ENCODE measurements at regions of chr20 and their contacts with region 1.

Region 1: DNA sequence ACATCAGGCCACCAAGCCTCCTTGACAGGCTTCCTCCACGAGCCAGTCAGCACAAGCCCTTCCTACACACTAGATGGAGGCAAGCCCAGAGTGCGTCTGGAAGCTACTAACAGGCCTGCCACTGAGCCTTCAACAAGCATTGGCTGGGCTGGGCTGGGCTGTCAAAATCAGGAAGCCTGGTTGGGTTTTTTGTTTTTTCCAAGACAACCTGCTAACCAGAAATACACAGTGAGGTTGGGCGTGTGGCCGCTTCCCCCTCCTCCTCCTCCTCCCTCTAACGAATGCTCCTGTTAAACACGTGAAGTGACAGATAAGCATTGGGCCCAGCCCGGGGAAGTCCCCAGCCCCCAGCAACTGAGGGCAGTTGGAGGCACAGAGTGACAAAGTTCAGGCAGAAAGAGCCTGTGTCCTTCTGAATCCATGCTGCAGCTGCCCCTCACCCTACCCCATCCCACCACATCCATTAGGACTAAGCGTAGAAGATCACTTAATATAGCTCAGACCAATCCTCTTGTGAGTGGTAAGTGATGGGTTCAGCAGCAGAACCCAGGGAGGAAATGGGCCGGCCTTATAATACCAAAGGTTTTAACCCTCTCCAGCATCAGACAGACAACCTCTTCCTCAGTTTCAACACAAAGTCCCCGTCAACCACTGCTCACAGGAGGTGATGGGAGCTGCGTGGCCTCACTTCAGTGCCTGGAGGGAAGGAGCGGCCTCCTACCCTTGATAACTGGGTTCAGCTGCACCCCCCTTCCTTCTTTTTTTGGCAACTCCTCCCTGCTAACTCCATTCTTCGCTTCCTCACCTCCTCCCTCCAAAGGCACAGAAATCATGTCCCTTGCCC is 1.1 kb downstream of the NFATC2 start:
- DNase-seq: peak; percentile 93
- ATAC-seq: peak; percentile 79
- H3K4me3 Mint-ChIP-seq: peak overlapping the region; percentile 89
- H3K27ac Mint-ChIP-seq: peak overlapping the region; percentile 100
- H3K4me1 Mint-ChIP-seq: peaks cover 45% of the 10 kb centered on the region
- H3K27me3 Mint-ChIP-seq: peaks cover 4% of the 10 kb centered on the region
- CTCF ChIP-seq: no peak

Region 2: GRCh38 chr20:51385646-51386530 is 155.5 kb before region 1 on chr20:
- CTCF ChIA-PET with region 1: interaction called, 19 read pairs
- POLR2A ChIA-PET with region 1: interaction called, 3 read pairs
- intact Hi-C with region 1: no loop called
- DNase-seq: peak; percentile 47
- ATAC-seq: no peak
- H3K4me3 Mint-ChIP-seq: no peak overlapping the region
- H3K27ac Mint-ChIP-seq: peak overlapping the region; percentile 21
- H3K4me1 Mint-ChIP-seq: peaks cover 68% of the 10 kb centered on the region
- H3K27me3 Mint-ChIP-seq: no peaks in the 10 kb centered on the region
- CTCF ChIP-seq: peak; percentile 66

Region 3: GRCh38 chr20:51469578-51470498 is 71.6 kb before region 1 on chr20:
- CTCF ChIA-PET with region 1: interaction called, 9 read pairs
- POLR2A ChIA-PET with region 1: interaction called, 16 read pairs
- intact Hi-C with region 1: loop called (anchors 2 kb)
- DNase-seq: no peak
- ATAC-seq: no peak
- H3K4me3 Mint-ChIP-seq: no peak overlapping the region
- H3K27ac Mint-ChIP-seq: peak overlapping the region; percentile 94
- H3K4me1 Mint-ChIP-seq: peaks cover 52% of the 10 kb centered on the region
- H3K27me3 Mint-ChIP-seq: no peaks in the 10 kb centered on the region
- CTCF ChIP-seq: no peak

Region 4: GRCh38 chr20:51492167-51493092 is 49.0 kb before region 1 on chr20:
- CTCF ChIA-PET with region 1: interaction called, 17 read pairs
- POLR2A ChIA-PET with region 1: interaction called, 31 read pairs
- intact Hi-C with region 1: no loop called
- DNase-seq: no peak
- ATAC-seq: no peak
- H3K4me3 Mint-ChIP-seq: no peak overlapping the region
- H3K27ac Mint-ChIP-seq: peak overlapping the region; percentile 92
- H3K4me1 Mint-ChIP-seq: peaks cover 93% of the 10 kb centered on the region
- H3K27me3 Mint-ChIP-seq: no peaks in the 10 kb centered on the region
- CTCF ChIP-seq: no peak

Region 5: DNA sequence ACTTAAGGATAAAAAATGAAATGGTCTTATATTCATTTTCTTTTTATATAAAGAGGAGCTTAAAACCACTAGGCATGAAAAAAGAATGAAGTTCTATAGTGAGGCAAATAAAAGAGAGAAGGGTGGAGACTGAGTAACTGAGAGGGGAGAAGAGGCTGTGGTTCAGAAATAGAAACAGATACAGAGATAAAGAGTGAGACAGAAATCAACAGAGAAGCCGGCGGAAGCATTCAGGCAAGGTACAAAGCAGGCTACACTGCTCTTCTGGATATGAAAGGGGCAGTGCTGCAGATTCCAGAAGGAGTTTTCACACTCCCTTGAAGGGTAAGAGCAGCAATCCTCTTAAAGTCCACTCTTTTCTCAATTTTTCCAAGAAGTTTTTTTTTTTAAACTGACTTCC is 28.8 kb before region 1 on chr20:
- CTCF ChIA-PET with region 1: interaction called, 4 read pairs
- POLR2A ChIA-PET with region 1: interaction called, 21 read pairs
- intact Hi-C with region 1: no loop called
- DNase-seq: no peak
- ATAC-seq: peak; percentile 84
- H3K4me3 Mint-ChIP-seq: no peak overlapping the region
- H3K27ac Mint-ChIP-seq: peak overlapping the region; percentile 84
- H3K4me1 Mint-ChIP-seq: peaks cover 73% of the 10 kb centered on the region
- H3K27me3 Mint-ChIP-seq: no peaks in the 10 kb centered on the region
- CTCF ChIP-seq: no peak

Region 6: GRCh38 chr20:51531141-51531710 is 10.2 kb before region 1 on chr20:
- CTCF ChIA-PET with region 1: interaction called, 23 read pairs
- POLR2A ChIA-PET with region 1: interaction called, 54 read pairs
- intact Hi-C with region 1: no loop called
- DNase-seq: peak; percentile 92
- ATAC-seq: peak; percentile 80
- H3K4me3 Mint-ChIP-seq: peak overlapping the region; percentile 74
- H3K27ac Mint-ChIP-seq: peak overlapping the region; percentile 99
- H3K4me1 Mint-ChIP-seq: peaks cover 91% of the 10 kb centered on the region
- H3K27me3 Mint-ChIP-seq: no peaks in the 10 kb centered on the region
- CTCF ChIP-seq: no peak

Region 7: GRCh38 chr20:51562332-51563155 is 21.1 kb after region 1 on chr20:
- CTCF ChIA-PET with region 1: interaction called, 3 read pairs
- POLR2A ChIA-PET with region 1: interaction called, 18 read pairs
- intact Hi-C with region 1: no loop called
- DNase-seq: peak; percentile 22
- ATAC-seq: peak; percentile 21
- H3K4me3 Mint-ChIP-seq: peak overlapping the region; percentile 62
- H3K27ac Mint-ChIP-seq: no peak overlapping the region
- H3K4me1 Mint-ChIP-seq: peaks cover 33% of the 10 kb centered on the region
- H3K27me3 Mint-ChIP-seq: peaks cover 51% of the 10 kb centered on the region
- CTCF ChIP-seq: no peak

Region 8: DNA sequence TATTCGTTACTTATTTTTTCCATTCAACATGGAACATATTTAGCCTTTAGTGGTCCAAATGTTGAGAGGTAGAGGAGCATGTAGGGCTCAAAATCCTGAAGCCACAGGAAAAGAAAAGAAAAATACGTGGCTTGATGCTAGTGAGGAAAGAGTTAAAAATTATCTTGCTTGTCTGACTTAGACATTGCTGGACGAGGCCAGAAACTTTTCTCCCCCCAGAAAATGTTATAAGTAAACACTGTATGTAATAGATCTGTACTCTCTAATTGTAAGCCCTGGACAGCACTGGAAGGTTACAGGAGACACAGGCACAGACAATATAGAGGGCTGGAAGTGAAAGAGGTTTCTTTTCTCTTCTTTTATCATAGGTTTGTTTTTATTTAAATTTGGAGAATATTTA is 484.5 kb after region 1 on chr20:
- CTCF ChIA-PET with region 1: no interaction called
- POLR2A ChIA-PET with region 1: no interaction called
- intact Hi-C with region 1: no loop called
- DNase-seq: no peak
- ATAC-seq: no peak
- H3K4me3 Mint-ChIP-seq: no peak overlapping the region
- H3K27ac Mint-ChIP-seq: no peak overlapping the region
- H3K4me1 Mint-ChIP-seq: peaks cover 4% of the 10 kb centered on the region
- H3K27me3 Mint-ChIP-seq: no peaks in the 10 kb centered on the region
- CTCF ChIP-seq: no peak